PC-9 (cell line): ENCODE measurements at regions of chr3 and their contacts with region 1.

Region 1: DNA sequence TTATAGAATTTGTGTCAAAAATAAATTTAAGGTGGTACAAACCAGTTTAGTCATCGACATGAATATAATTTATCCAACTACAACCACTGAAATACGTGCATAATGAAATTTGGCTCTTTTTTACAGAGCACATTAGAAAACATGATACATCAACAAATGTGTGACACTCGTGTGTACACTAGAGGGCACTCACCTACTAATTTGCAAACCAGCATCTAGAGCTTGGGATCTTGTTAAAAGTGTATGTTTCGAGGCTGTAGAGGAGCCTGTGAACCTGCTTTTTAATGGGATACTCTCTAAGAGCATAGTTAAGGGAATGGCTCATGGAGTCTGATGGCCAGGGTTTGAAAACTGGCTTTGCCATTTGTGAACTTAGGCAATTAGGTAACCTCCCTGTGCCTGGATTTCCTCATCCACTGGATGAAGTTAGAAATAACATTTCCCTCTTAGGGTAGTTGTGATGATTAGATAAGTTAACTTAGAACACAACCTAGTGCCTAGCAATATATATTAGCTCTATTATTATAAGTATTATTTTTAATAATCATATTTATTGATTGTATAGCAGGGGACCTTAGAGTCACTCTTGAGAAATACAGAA is 8.8 kb upstream of the CPOX start:
- DNase-seq: peak; percentile 29 to 61
- H3K4me3 ChIP-seq: no peak overlapping the region
- H3K27ac ChIP-seq: no peak overlapping the region
- H3K4me1 ChIP-seq: no peaks in the 10 kb centered on the region
- H3K27me3 ChIP-seq: no peaks in the 10 kb centered on the region
- CTCF ChIP-seq: peak; percentile 95

Region 2: GRCh38 chr3:98657457-98657856 is 55.3 kb after region 1 on chr3:
- CTCF ChIA-PET with region 1: no interaction called
- POLR2A ChIA-PET with region 1: no interaction called
- intact Hi-C with region 1: no loop called
- DNase-seq: peak in 1 of 2 experiments; percentile 26
- H3K4me3 ChIP-seq: no peak overlapping the region; the same call in 1 of the 2 replicates
- H3K27ac ChIP-seq: no peak overlapping the region
- H3K4me1 ChIP-seq: no peaks in the 10 kb centered on the region
- H3K27me3 ChIP-seq: no peaks in the 10 kb centered on the region
- CTCF ChIP-seq: no peak; the same call in 1 of the 2 replicates

Region 3: GRCh38 chr3:98994128-98994762 is 392.1 kb after region 1 on chr3:
- CTCF ChIA-PET with region 1: interaction called, 4 read pairs
- POLR2A ChIA-PET with region 1: no interaction called
- intact Hi-C with region 1: loop called (anchors 1 kb)
- DNase-seq: peak in 1 of 2 experiments; percentile 57
- H3K4me3 ChIP-seq: no peak overlapping the region
- H3K27ac ChIP-seq: no peak overlapping the region
- H3K4me1 ChIP-seq: no peaks in the 10 kb centered on the region
- H3K27me3 ChIP-seq: no peaks in the 10 kb centered on the region
- CTCF ChIP-seq: peak; percentile 97

Region 4: GRCh38 chr3:99764377-99764776 is 1162.2 kb after region 1 on chr3:
- CTCF ChIA-PET with region 1: interaction called, 11 read pairs
- POLR2A ChIA-PET with region 1: no interaction called
- intact Hi-C with region 1: no loop called
- DNase-seq: no peak
- H3K4me3 ChIP-seq: no peak overlapping the region
- H3K27ac ChIP-seq: no peak overlapping the region
- H3K4me1 ChIP-seq: no peaks in the 10 kb centered on the region
- H3K27me3 ChIP-seq: no peaks in the 10 kb centered on the region
- CTCF ChIP-seq: no peak

Region 5: DNA sequence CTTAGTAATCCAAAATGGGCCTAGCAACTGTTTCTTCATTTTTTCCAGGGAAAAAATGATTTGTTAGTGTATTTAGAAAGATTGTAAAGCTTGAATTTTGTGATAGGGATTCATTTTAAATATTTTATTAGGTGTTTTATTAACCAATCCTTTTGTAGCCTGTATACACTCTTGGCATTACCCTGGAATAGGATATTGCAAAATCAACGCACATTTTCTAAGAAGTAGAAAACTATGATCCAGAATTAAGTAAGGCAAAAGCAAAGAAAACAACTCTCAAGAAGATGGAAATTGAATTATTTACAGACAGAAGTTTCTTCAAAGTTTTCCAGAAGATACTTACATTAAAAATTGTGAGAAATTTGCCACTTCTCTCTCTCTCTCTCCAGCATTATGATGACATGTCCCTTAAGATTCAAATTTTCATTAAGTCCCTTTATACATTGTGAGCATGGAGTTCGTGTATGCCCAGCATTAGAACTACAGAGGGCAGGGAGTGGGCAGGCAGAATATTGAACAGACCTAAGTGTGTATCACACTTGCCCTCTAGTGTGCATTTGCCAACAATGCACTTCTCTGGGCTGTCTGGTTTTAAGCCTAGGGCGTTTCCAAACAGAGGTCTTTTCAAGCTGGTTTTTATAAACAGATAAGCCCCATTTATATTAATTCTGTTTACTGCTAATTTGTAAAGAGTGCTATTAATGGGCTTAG is 1187.0 kb after region 1 on chr3:
- CTCF ChIA-PET with region 1: no interaction called
- POLR2A ChIA-PET with region 1: no interaction called
- intact Hi-C with region 1: loop called (anchors 10 kb)
- DNase-seq: peak; percentile 34 to 46
- H3K4me3 ChIP-seq: no peak overlapping the region
- H3K27ac ChIP-seq: no peak overlapping the region
- H3K4me1 ChIP-seq: no peaks in the 10 kb centered on the region
- H3K27me3 ChIP-seq: no peaks in the 10 kb centered on the region
- CTCF ChIP-seq: peak; percentile 89